ENCODE measurements at regions of chr4 and their contacts with region 1.

Region 1: GRCh38 chr4:1746265-1746691 is 25.0 kb downstream of the TACC3 start:
- DNase-seq: peak; percentile 84
- H3K4me3 ChIP-seq: no peak overlapping the region
- H3K27ac ChIP-seq: no peak overlapping the region
- H3K4me1 ChIP-seq: no peaks in the 10 kb centered on the region
- CTCF ChIP-seq: peak; percentile 91

Region 2: DNA sequence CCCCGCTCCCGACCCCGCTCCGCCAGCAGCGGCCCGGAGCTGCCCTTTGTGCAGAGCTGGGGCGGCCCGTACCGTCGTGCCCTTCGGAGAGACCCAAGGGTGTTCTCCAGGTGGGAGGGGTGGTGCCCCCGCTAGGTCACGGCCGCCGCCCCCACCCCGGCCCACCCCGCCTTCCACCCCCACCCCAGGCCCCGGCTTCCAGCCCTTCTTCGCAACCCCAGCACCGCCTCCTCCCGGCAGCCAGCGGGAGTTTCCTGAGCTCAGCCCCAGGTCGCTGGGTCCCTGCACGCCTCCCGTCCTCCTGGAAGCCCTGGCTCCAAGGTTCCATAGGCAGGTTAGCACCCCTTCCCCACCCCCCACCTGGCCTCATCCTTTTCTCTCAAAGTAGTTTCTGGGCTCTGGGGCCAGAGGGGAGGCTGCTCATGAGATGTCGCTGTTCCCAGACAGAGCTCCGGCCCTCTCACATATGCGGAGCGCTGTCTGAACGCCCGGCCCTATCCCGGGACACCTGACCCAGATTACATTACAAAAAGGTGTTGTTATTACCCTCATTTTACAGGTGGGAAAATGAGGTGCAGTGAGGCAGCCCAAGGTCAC is 21.6 kb after region 1 on chr4:
- CTCF ChIA-PET with region 1: no interaction called
- POLR2A ChIA-PET with region 1: no interaction called
- intact Hi-C with region 1: no loop called
- DNase-seq: peak; percentile 47
- H3K4me3 ChIP-seq: peak overlapping the region; percentile 59
- H3K27ac ChIP-seq: no peak overlapping the region
- H3K4me1 ChIP-seq: peaks cover 5% of the 10 kb centered on the region
- CTCF ChIP-seq: peak; percentile 50

Region 3: GRCh38 chr4:1809754-1810511 is 63.7 kb after region 1 on chr4:
- CTCF ChIA-PET with region 1: no interaction called
- POLR2A ChIA-PET with region 1: no interaction called
- intact Hi-C with region 1: loop called (anchors 1 kb)
- DNase-seq: peak; percentile 72
- H3K4me3 ChIP-seq: no peak overlapping the region
- H3K27ac ChIP-seq: no peak overlapping the region
- H3K4me1 ChIP-seq: peaks cover 5% of the 10 kb centered on the region
- CTCF ChIP-seq: peak; percentile 89

Region 4: DNA sequence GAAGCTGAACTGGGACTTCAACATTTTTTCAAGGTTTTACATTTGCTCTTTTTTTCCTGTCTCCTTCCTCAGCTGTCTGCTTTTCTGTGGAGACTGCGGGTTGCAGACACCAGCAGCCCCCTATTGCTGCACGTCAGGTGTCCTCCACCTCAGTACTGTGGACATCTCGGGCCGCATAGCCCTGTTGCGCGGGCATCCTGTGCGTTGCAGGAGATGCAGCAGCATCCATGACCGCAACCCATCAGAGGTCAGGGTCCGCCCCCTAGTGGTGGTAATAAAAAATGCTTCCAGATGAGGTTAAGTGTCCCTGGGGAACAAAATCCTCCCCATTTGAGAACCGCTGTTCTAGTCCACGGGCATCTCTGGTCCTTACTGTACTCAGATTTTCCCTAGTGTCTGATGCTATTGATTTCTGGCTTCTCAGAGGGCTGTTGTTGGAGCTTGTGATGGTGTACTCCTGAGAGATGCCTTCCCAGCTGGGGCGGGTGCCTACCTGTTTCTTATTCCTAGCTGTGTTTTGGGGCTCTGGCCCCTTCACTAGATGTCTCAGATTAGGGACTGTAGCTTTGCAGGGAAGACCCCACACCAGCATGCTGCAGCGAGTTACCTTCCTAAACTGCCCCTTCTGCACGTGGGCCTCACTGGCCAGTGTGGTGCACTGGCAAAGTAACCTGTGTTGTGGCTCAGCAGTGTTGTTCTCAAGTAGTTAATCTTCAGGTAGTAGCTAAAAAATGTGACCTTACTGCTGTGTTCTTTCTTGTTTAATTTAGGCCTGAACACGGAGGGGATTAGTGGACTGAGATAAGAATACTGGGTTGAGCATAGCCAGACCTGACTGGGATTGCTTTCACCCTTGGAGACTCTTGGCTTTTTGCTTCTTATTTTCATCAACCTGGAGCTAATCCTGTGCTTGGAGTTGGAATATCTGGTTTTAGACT is 153.1 kb after region 1 on chr4:
- CTCF ChIA-PET with region 1: no interaction called
- POLR2A ChIA-PET with region 1: no interaction called
- intact Hi-C with region 1: loop called (anchors 5 kb)
- DNase-seq: peak; percentile 83
- H3K4me3 ChIP-seq: no peak overlapping the region
- H3K27ac ChIP-seq: peak overlapping the region; percentile 52
- H3K4me1 ChIP-seq: peaks cover 14% of the 10 kb centered on the region
- CTCF ChIP-seq: peak; percentile 95

Region 5: DNA sequence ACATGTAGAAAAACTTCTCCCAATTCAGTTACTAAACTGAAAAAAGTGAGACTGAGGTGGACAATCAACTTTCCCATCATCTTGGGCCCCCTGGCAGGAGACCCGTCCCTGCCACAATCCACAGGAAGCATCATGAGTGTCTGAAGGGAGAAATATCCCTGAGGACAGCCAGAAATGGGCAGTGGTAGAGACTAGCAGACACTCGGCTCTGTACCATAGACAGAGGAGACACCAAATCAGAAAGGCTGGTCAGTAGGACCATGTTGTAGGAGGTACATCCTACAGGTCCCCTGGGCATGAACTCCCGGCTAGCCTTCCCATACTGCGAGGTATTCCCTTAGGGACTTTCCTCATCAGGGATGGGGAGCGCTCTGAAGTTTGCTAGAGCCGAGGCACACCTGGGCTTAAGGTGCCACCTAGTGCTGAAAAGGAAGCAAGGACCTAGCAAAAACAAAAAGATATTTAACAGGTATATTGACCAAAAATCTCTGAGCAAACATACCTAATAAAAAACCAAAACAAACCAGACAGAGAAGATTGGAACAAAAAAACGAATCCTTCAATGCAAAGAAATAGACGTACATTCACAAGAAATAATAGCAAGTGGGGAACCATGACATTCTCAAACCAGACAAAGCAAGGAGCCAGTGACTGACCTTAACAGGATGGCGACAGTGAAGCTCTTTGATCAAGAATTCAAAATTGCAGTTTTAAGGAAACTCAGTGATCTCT is 440.0 kb after region 1 on chr4:
- CTCF ChIA-PET with region 1: no interaction called
- POLR2A ChIA-PET with region 1: no interaction called
- intact Hi-C with region 1: loop called (anchors 5 kb)
- DNase-seq: peak; percentile 9
- H3K4me3 ChIP-seq: no peak overlapping the region
- H3K27ac ChIP-seq: no peak overlapping the region
- H3K4me1 ChIP-seq: no peaks in the 10 kb centered on the region
- CTCF ChIP-seq: peak; percentile 78

Measured in OCI-LY7 (cell line).